ENCODE measurements at regions of chr11 and their contacts with region 1.

Region 1: GRCh38 chr11:134282121-134283045 is 6.2 kb downstream of the GLB1L3 start:
- DNase-seq: no peak
- H3K27ac ChIP-seq: no peak overlapping the region
- CTCF ChIP-seq: no peak

Region 2: DNA sequence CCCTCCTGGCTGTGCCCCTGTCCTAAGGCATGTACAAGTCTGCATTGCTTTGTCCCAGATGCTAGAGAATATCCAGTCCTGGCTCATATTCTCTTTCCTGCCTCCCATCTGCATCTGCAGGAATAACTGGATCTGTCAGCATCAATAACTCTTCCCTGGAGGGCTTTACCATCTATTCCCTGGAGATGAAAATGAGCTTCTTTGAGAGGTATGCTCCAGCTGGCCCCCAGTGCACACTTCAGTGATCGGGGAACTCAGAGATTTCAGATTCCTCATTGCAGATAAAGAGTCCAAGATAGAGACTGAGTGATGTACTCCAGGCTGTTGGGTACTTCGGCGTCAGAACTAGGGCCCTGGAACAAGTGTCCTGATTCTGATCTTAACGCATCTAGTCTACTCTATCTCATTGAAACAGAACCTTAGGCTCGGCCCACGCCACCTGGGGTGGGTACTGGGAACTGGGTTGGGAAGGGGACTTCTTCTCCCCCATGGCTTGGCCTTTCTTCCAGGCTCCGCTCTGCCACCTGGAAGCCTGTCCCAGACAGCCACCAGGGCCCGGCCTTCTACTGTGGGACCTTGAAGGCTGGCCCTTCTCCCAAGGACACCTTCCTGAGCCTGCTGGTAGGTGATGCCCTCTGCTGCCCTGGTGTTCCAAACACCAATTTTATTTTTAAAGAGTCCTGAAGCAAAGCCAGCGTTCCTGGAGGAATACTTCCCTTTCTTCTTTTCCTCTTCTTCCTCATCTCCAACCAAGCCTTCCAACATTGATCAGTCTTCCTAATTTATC is 31.6 kb after region 1 on chr11:
- CTCF ChIA-PET with region 1: no interaction called
- POLR2A ChIA-PET with region 1: no interaction called
- DNase-seq: no peak
- H3K27ac ChIP-seq: no peak overlapping the region
- CTCF ChIP-seq: no peak

Region 3: GRCh38 chr11:134358165-134358855 is 75.9 kb after region 1 on chr11:
- CTCF ChIA-PET with region 1: no interaction called
- POLR2A ChIA-PET with region 1: interaction called, 12 read pairs
- DNase-seq: no peak
- H3K27ac ChIP-seq: no peak overlapping the region
- CTCF ChIP-seq: no peak